ENCODE measurements at regions of chr11 and their contacts with region 1.

Region 1: GRCh38 chr11:44286268-44286880 is 23.6 kb downstream of the ALX4 start:
- DNase-seq: peak; percentile 86
- CTCF ChIP-seq: peak; percentile 99

Region 2: GRCh38 chr11:43784866-43785265 is 501.5 kb before region 1 on chr11:
- CTCF ChIA-PET with region 1: no interaction called
- POLR2A ChIA-PET with region 1: no interaction called
- DNase-seq: no peak
- CTCF ChIP-seq: no peak

Region 3: DNA sequence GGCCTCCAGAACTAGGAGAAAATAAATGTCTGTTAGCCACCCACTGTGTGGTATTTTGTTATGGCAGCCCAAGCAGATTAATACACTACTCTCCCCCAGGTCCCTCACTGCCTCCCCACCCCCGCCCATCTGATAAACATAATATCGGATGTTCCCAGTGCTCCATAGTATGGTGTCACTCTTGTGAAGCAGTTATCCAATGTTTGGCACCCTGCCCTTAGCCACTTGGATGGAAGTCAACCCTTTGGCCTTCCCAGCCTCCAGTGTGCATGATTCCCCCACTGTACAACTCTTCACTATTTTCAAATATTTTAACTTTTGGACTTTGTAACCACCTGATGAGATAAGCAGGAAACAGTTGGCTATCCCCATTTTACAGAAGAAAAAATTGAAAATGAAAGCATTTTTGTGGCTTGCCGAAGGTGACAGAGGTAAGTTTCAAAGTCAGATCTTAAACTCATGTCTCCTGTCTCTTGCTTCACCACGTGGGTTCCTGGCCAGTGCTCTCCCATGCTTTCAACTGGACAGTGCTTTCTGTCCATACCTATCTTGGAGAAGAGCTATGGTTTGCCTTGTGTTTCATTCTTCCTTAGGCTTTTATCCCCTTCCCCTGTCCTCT is 29.6 kb before region 1 on chr11:
- CTCF ChIA-PET with region 1: interaction called, 14 read pairs
- POLR2A ChIA-PET with region 1: no interaction called
- DNase-seq: no peak
- CTCF ChIP-seq: no peak

Region 4: GRCh38 chr11:44267750-44268613 is 18.4 kb before region 1 on chr11:
- CTCF ChIA-PET with region 1: interaction called, 17 read pairs
- POLR2A ChIA-PET with region 1: no interaction called
- DNase-seq: no peak
- CTCF ChIP-seq: no peak

Region 5: GRCh38 chr11:44275241-44275640 is 11.1 kb before region 1 on chr11:
- CTCF ChIA-PET with region 1: interaction called, 12 read pairs
- POLR2A ChIA-PET with region 1: no interaction called
- DNase-seq: no peak
- CTCF ChIP-seq: no peak

Region 6: GRCh38 chr11:44301856-44302231 is 15.5 kb after region 1 on chr11:
- CTCF ChIA-PET with region 1: interaction called, 10 read pairs
- POLR2A ChIA-PET with region 1: no interaction called
- DNase-seq: no peak
- CTCF ChIP-seq: no peak

Region 7: DNA sequence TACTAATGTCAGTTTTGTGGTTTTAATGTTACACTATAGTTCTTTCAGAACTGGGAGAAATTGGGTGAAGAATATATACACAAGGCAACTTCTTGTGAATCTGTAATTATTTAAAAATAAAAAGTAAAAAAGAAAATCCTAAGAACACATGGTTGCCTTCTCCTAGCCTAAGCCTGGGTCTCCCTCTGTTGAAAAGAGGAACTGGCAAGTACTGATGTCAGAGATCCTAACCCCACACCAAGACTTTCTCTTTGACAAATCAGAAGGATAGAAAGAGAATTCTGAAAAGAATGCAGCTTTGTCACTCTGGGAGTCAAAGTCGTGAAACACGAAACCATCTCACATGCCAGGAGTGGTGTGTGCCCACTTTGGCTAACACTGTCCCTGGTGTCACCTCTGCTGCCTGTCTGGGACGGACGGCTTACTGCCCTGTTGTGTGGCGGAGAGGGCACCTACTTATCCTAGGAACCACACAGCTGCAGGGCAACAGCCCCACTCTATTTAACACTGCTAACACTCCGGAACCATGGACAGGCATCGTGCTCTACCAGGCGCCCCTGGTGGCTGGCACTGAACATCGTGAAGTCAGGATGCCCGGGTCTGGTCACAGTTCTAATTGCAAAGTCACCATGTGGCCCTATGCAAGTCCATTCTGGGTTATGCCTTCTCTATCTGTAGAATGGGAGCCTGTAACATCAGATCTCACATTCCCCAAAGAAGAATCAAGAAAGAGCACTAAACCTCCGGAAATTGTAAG is 170.3 kb after region 1 on chr11:
- CTCF ChIA-PET with region 1: no interaction called
- POLR2A ChIA-PET with region 1: no interaction called
- DNase-seq: no peak
- CTCF ChIP-seq: no peak

Region 8: GRCh38 chr11:44538375-44539054 is 252.1 kb after region 1 on chr11:
- CTCF ChIA-PET with region 1: interaction called, 95 read pairs
- POLR2A ChIA-PET with region 1: no interaction called
- DNase-seq: peak; percentile 86
- CTCF ChIP-seq: peak; percentile 87

Measured in GM10248 (cell line).